GM12878 (cell line): ENCODE measurements at regions of chr4 and their contacts with region 1.

Region 1: GRCh38 chr4:17124767-17125166 is 226.3 kb upstream of the LDB2 start:
- DNase-seq: no peak
- ATAC-seq: no peak
- H3K4me3 ChIP-seq: no peak overlapping the region
- H3K27ac ChIP-seq: no peak overlapping the region
- H3K4me1 ChIP-seq: no peaks in the 10 kb centered on the region
- H3K27me3 ChIP-seq: no peaks in the 10 kb centered on the region
- CTCF ChIP-seq: no peak
- EP300 ChIP-seq: no peak
- POLR2A ChIP-seq: no peak
- RAD21 ChIP-seq: no peak

Region 2: DNA sequence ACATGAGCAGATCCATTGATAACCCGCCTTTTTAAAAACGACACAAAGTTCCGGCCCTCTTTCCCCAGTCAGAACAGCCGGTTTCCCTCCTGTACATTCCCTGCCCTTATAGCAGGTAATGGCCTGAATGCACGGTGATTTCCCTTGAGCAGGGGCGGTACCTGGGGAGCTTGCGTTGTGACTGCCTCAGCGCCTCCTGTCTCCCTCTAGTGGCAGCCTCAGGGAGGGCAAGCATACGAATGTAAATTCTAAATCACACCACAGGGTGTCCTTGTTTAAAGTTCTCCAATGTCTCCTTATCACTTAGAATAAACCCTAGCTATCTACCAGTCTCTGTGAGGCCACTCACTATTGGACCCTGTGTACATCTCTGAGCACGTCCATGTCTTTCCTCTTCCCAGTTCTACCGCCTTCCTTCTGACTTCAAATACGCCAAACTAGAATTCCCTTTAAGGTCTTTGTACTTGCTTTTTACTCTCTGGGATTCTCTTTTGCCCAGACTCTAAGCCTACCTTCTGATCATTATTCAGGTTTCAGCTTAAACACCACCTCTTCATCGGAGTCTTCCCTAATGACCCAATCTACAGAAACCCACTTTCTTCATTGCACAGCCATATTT is 207.9 kb before region 1 on chr4:
- CTCF ChIA-PET with region 1: no interaction called
- POLR2A ChIA-PET with region 1: no interaction called
- RAD21 ChIA-PET with region 1: no interaction called
- SMC1A ChIA-PET with region 1: no interaction called
- in situ Hi-C with region 1: no loop called
- intact Hi-C with region 1: loop called (anchors 10 kb)
- DNase-seq: peak; percentile 47
- ATAC-seq: peak; percentile 100
- H3K4me3 ChIP-seq: no peak overlapping the region
- H3K27ac ChIP-seq: no peak overlapping the region
- H3K4me1 ChIP-seq: no peaks in the 10 kb centered on the region
- H3K27me3 ChIP-seq: no peaks in the 10 kb centered on the region
- CTCF ChIP-seq: peak; percentile 96 to 98 (median 97)
- EP300 ChIP-seq: no peak
- POLR2A ChIP-seq: no peak
- RAD21 ChIP-seq: peak; percentile 66